Lower leg skin (tissue), 4 donors: ENCODE measurements at regions of chr12 and their contacts with region 1.

Region 1: GRCh38 chr12:95262808-95263207 is 45.2 kb downstream of the VEZT start:
- DNase-seq: no peak
- H3K4me3 ChIP-seq: no peak overlapping the region
- CTCF ChIP-seq: no peak
- POLR2A ChIP-seq: no peak

Region 2: DNA sequence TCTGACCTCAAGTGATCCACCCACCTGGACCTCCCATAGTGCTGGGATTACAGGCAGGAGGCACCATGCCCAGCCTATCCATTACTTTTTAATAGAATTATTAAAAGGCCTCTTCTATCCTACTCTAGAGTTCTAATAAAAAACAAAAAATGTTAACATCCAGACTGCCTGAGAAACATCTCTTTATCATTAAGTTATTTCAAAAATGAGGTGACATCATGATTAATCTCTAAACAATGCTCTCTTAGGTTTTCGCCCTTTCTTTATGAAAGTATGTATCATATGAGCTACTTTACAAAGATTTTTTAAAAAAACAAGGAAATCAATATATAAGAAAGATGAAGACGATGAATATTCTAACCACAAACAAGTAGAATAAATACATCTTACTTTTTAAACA is 98.2 kb before region 1 on chr12:
- intact Hi-C with region 1: no loop called
- DNase-seq: no peak
- H3K4me3 ChIP-seq: no peak overlapping the region
- CTCF ChIP-seq: no peak
- POLR2A ChIP-seq: no peak

Region 3: GRCh38 chr12:95231190-95231589 is 31.6 kb before region 1 on chr12:
- intact Hi-C with region 1: loop called (anchors 2 kb)
- DNase-seq: no peak
- H3K4me3 ChIP-seq: no peak overlapping the region
- CTCF ChIP-seq: no peak
- POLR2A ChIP-seq: no peak